ENCODE measurements at regions of chr7 and their contacts with region 1.

Region 1: DNA sequence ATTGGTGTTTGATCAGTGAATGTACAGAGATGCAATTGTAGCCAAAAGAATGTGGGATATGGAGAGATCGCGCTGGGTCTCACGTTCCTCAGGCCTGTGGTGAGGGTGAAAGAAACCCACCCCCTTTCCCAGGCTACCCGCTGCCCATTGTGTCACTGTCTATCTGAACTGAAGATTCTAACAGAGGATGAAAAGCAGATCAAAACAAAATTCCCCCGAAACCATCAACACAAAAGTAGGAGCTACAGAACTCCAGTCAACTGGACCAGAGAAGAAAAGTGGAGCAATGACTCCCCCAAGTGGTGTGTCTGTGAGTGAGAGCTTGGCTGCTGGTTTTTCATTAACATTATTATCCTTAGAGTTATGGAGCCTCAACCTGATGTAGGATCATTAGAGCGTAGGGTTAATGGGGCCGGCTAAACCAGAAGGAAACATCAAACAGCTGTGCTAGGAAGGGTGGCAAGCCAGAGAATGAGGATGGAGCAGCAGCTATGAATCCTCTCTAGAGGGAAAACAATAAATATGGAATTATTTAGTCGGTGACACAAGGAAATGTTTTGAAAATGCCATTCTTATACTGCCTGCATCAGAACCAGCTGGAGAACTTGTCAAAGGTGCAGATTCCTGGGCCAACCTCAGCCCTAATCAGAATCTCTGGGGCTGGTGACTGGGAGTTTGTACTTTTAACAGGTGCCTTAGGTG is 38.3 kb downstream of the AKR1B1 start:
- ATAC-seq: peak in 7 of 8 experiments; percentile 30 to 92 (median 79)
- H3K4me3 ChIP-seq: no peak overlapping the region
- H3K27ac ChIP-seq: no peak overlapping the region
- H3K4me1 ChIP-seq: no peaks in the 10 kb centered on the region

Region 2: GRCh38 chr7:134126966-134127848 is 293.4 kb before region 1 on chr7 and contains the start of gene LRGUK:
- in situ Hi-C with region 1: loop called in 1 of 9 experiments (anchors 25 kb)
- ATAC-seq: peak; percentile 99 to 100 (median 100)
- H3K4me3 ChIP-seq: peak within 1 kb of the TSS; percentile 50 to 74 (median 57)
- H3K27ac ChIP-seq: peak within 1 kb of the TSS; percentile 7 to 35
- H3K4me1 ChIP-seq: peaks cover 11 to 15% of the 10 kb centered on the region in 2 donors
- total RNA-seq, gene LRGUK: 0.31 to 6.7 (median 1.7) TPM

Measured in motor neuron (in vitro differentiated cells).